ENCODE measurements at regions of chr14 and their contacts with region 1.

Region 1: GRCh38 chr14:77314043-77314442 is 6.6 kb downstream of the POMT2 start:
- DNase-seq: peak; percentile 80
- H3K4me3 ChIP-seq: no peak overlapping the region
- CTCF ChIP-seq: no peak

Region 2: DNA sequence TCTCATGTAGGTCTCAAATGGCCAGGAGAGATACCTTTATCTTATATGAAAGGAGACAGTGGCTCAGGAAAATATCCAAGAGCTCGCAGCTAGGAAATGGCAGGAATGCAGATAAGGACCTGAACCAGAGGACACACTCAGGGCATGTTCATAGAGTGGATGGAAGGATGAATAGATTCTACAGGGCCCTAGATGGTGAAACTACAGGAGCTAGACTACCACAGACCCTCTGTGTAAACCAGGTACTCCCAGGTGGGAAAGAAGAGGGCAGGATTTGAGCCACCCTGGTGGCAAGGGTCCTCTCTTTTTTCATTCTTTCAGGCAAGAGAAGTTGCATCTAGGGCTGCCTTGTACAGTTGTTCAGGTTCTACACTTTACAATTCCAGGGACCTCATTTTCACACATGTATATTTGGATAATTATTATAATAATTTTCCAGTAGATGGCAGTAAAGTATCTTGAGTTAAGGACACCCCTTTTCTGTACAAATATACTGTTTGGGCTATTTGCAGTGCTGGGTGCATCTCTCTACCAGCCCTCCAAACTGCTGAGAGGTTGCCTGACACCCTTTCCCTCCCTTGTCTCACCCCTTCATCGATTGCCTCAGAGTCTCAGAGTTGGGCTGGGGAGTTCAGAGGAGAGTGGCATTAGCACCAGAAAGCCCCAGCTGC is 162.0 kb before region 1 on chr14:
- CTCF ChIA-PET with region 1: interaction called, 179 read pairs
- POLR2A ChIA-PET with region 1: no interaction called
- DNase-seq: no peak
- H3K4me3 ChIP-seq: no peak overlapping the region
- CTCF ChIP-seq: no peak

Region 3: DNA sequence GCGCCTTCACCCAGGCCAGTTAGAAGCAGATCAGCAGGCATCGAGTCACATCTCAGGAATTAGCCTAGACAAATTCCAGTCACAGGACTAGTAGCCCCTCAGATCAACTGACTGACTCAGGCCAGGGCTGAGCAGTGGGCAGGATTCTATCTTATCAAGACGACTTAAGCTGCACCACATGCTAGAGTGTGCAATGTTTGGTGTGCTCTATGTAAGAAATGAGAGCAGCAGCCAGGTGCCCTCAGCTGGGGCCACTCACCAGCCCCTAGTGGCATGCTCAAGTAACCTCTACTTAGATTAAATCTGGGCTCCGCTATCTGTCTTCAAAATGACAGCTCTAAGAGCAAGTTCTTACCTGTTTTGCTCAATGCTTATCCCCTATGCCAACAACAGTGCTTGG is 23.3 kb before region 1 on chr14:
- CTCF ChIA-PET with region 1: interaction called, 416 read pairs
- POLR2A ChIA-PET with region 1: no interaction called
- DNase-seq: no peak
- H3K4me3 ChIP-seq: no peak overlapping the region
- CTCF ChIP-seq: no peak

Region 4: GRCh38 chr14:77326167-77326566 is 12.1 kb after region 1 on chr14:
- CTCF ChIA-PET with region 1: interaction called, 23 read pairs
- POLR2A ChIA-PET with region 1: no interaction called
- DNase-seq: no peak
- H3K4me3 ChIP-seq: no peak overlapping the region
- CTCF ChIP-seq: no peak

Region 5: GRCh38 chr14:77542421-77543239 is 228.6 kb after region 1 on chr14:
- CTCF ChIA-PET with region 1: no interaction called
- POLR2A ChIA-PET with region 1: no interaction called
- DNase-seq: no peak
- H3K4me3 ChIP-seq: no peak overlapping the region
- CTCF ChIP-seq: no peak